Body of pancreas (tissue), 4 donors: ENCODE measurements at regions of chr1 and their contacts with region 1.

Region 1: DNA sequence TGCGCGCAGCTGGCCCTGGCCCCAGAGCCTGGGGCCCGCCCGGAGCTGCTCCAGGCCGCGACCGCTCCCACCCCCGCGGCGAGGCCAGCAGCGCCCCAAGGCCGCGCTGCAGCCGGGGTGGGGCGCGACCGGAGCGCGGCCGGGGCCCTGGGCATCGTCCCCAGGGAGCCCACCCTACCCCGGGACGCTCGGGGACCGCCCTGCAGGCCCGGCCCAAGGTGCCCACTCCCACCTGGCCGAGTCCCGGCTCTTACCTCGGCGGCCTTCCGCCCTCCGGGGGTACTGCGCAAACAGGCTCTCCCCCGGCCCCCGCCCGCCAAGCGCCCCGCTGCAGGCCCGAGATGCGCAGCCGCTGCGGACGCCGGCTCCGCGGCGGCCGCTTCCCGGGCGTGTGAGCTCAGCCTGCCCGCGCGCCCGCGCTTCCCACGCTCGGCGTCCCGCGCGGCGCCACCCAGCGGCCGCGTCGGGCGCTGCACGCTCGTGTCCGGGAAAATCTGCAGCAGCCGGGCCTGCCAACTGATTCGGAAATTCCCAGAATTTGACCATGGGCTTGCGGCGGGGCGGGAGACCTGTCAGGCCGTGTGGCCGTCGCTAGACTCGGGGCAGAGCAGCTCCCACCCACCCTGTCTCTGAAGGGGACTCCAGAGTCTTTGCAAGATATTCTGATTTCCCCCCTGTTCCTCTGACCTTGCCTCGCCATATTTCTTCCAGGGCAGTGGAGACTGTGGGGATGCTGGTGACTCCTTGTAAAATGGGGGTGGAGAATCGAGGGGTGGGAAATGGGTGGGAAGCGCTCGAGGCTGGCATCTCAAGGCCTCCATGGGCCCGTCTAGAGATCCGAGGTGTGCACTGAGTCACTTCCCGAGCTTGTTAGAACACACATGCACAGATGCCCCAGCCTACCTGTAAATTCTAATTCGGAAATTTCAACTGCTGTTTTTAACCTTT is 41.9 kb downstream of the CD34 start:
- DNase-seq: peak; percentile 80 to 85 (median 84)
- ATAC-seq: peak; percentile 87
- H3K4me3 ChIP-seq: peak overlapping the region; percentile 20 to 59
- H3K27ac ChIP-seq: peak overlapping the region; percentile 82 to 88 (median 86)
- H3K4me1 ChIP-seq: peaks cover 52% of the 10 kb centered on the region
- H3K27me3 ChIP-seq: no peaks in the 10 kb centered on the region
- CTCF ChIP-seq: peak; percentile 55 to 99 (median 91)
- POLR2A ChIP-seq: peak; percentile 32 to 54 (median 48)

Region 2: DNA sequence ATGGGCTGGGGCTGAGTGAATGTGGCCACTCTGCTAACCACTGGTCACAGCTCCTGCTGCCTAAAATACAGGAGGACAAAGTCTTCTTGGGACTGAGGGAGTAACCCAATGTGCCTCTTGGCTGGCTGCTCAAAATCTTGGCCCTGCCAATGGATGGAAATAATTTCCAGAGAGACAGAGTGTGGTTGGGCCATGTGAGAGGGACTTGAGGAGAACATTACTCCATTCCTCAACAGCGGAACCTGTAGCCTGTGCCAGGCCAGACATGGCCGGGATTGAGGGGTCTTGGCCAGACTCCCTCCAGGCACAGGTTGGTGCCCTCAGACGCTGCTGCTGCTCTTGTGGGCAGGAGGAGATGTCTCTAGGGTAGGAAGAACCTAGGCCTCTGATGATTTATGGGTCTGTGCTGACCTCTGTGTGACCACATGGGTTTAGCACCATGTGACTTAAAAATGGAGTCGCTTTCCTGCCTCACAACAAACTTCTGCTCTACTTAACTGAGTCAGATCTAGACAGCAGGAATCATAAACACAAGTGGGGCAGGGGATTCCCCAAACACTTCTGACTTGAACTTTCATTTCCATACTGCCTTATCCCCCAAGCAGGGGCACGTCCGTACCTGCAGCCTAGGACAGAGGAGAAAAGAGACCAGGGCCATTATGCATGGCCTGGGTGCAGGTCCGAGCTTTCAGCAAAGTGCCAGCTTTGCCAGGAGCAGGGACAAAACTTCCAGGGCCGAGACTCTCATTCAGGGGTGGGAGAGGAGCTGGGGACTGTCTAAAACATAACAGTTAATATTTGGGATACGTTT is 37.3 kb before region 1 on chr1:
- intact Hi-C with region 1: loop called (anchors 5 kb)
- DNase-seq: no peak
- ATAC-seq: no peak
- H3K4me3 ChIP-seq: no peak overlapping the region
- H3K27ac ChIP-seq: peak overlapping the region; percentile 62 to 73 (median 70)
- H3K4me1 ChIP-seq: peaks cover 71% of the 10 kb centered on the region
- H3K27me3 ChIP-seq: no peaks in the 10 kb centered on the region
- CTCF ChIP-seq: no peak
- POLR2A ChIP-seq: no peak

Region 3: GRCh38 chr1:208329300-208329699 is 460.3 kb after region 1 on chr1:
- intact Hi-C with region 1: no loop called
- DNase-seq: no peak
- ATAC-seq: no peak
- H3K4me3 ChIP-seq: no peak overlapping the region
- H3K27ac ChIP-seq: no peak overlapping the region
- H3K4me1 ChIP-seq: no peaks in the 10 kb centered on the region
- H3K27me3 ChIP-seq: no peaks in the 10 kb centered on the region
- CTCF ChIP-seq: no peak
- POLR2A ChIP-seq: no peak